B cell (primary cell): ENCODE measurements at regions of chrX and their contacts with region 1.

Region 1: DNA sequence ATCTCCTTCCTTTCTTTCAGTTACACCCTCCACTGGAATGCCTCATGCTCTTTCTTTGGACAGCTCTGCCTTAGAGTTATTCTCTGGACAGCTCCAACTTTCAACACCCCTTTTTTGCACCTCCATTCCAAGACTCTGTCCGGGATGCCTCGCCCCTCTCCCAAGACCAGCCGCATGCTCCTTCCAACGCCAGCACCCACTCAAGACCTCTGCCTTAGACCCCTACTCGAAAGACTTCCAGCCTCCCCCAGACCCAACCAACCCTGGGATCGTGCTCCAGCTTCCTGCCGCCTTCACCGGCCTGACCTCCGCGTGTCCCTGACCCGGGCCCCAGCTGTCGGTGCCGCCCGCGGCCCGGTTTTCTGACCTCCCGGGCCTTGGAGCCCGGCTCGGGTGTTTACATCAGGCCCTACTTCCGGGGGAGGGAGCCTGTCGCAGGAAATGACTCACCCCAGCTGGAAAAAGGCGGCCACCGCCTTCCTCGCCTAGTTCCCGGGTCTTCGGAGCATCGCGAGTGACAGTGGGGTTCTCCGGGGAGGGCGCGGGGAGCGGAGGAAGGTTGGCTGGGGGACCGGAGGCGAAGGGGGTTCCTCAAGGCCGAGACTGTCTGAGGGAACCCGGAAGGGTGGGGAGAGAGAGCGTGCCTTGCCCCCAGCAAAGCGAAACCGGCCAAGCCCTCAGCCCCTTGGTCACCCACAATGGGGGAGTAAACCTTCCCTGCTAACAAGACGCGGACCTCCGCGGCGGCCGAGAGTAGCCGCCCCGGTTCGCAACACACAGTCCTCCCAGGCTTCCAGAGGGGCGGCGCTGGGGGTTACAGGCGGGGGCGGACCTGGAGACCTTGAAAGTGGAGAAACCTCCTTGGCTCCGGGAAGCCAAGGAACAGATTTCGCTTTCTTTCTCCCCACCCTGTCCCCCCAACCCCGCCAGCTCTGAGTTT is at the start of gene WDR45:
- DNase-seq: peak; percentile 78
- ATAC-seq: peak; percentile 79
- H3K4me3 ChIP-seq: peak within 1 kb of the TSS; percentile 27 to 73 (median 67)
- H3K4me3 Mint-ChIP-seq: peak within 1 kb of the TSS; percentile 95
- H3K27ac ChIP-seq: peak within 1 kb of the TSS; percentile 94 to 97
- H3K27ac Mint-ChIP-seq: peak within 1 kb of the TSS; percentile 99
- H3K4me1 ChIP-seq: peaks cover 6 to 8% of the 10 kb centered on the region in 2 donors
- H3K4me1 Mint-ChIP-seq: peaks cover 14% of the 10 kb centered on the region
- H3K27me3 ChIP-seq: no peaks in the 10 kb centered on the region
- H3K27me3 Mint-ChIP-seq: no peaks in the 10 kb centered on the region
- CTCF ChIP-seq: no peak
- total RNA-seq, gene WDR45: 92.0 and 100 TPM in 2 replicates

Region 2: GRCh38 chrX:48558271-48558670 is 521.5 kb before region 1 on chrX:
- CTCF ChIA-PET with region 1: no interaction called
- POLR2A ChIA-PET with region 1: no interaction called
- intact Hi-C with region 1: no loop called
- DNase-seq: no peak
- ATAC-seq: no peak
- H3K4me3 ChIP-seq: no peak overlapping the region
- H3K4me3 Mint-ChIP-seq: no peak overlapping the region
- H3K27ac ChIP-seq: no peak overlapping the region
- H3K27ac Mint-ChIP-seq: no peak overlapping the region
- H3K4me1 ChIP-seq: no peaks in the 10 kb centered on the region
- H3K4me1 Mint-ChIP-seq: no peaks in the 10 kb centered on the region
- H3K27me3 ChIP-seq: no peaks in the 10 kb centered on the region
- H3K27me3 Mint-ChIP-seq: no peaks in the 10 kb centered on the region
- CTCF ChIP-seq: no peak

Region 3: GRCh38 chrX:49002091-49002935 is 77.4 kb before region 1 on chrX and contains the start of gene GRIPAP1:
- CTCF ChIA-PET with region 1: no interaction called
- POLR2A ChIA-PET with region 1: interaction called, 4 read pairs
- intact Hi-C with region 1: loop called (anchors 2 kb)
- DNase-seq: peak; percentile 93
- ATAC-seq: peak; percentile 85
- H3K4me3 ChIP-seq: peak within 1 kb of the TSS; percentile 66 to 93 (median 86)
- H3K4me3 Mint-ChIP-seq: peak within 1 kb of the TSS; percentile 95
- H3K27ac ChIP-seq: peak within 1 kb of the TSS; percentile 97 to 99
- H3K27ac Mint-ChIP-seq: peak within 1 kb of the TSS; percentile 98
- H3K4me1 ChIP-seq: peaks cover 8 to 14% of the 10 kb centered on the region in 2 donors
- H3K4me1 Mint-ChIP-seq: peaks cover 28% of the 10 kb centered on the region
- H3K27me3 ChIP-seq: no peaks in the 10 kb centered on the region
- H3K27me3 Mint-ChIP-seq: no peaks in the 10 kb centered on the region
- CTCF ChIP-seq: no peak
- total RNA-seq, gene GRIPAP1: 143 and 150 TPM in 2 replicates

Region 4: DNA sequence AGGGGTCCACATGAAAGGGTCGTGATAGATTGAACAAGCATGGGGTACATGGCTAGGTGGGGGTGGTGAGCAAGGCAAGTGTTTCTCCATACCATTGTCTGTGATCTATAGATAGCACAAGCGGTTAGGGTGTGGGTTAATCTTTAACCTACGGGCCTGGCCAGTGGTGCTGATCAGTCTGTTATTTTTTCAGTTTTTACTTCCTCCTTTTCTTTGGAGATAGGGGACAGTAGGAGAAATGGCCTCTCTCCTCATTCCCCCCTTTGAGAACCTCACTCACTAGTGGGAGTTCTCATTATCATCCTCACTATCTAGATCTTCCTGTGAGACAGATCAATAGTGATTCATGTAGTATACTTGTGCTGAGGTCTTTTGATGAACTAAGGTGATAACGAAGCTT is 60.0 kb after region 1 on chrX:
- CTCF ChIA-PET with region 1: no interaction called
- POLR2A ChIA-PET with region 1: interaction called, 12 read pairs
- intact Hi-C with region 1: no loop called
- DNase-seq: no peak
- ATAC-seq: no peak
- H3K4me3 ChIP-seq: no peak overlapping the region
- H3K4me3 Mint-ChIP-seq: no peak overlapping the region
- H3K27ac ChIP-seq: no peak overlapping the region
- H3K27ac Mint-ChIP-seq: no peak overlapping the region
- H3K4me1 ChIP-seq: no peaks in the 10 kb centered on the region
- H3K4me1 Mint-ChIP-seq: no peaks in the 10 kb centered on the region
- H3K27me3 ChIP-seq: no peaks in the 10 kb centered on the region
- H3K27me3 Mint-ChIP-seq: no peaks in the 10 kb centered on the region
- CTCF ChIP-seq: no peak